ENCODE measurements at regions of chr3 and their contacts with region 1.

Region 1: DNA sequence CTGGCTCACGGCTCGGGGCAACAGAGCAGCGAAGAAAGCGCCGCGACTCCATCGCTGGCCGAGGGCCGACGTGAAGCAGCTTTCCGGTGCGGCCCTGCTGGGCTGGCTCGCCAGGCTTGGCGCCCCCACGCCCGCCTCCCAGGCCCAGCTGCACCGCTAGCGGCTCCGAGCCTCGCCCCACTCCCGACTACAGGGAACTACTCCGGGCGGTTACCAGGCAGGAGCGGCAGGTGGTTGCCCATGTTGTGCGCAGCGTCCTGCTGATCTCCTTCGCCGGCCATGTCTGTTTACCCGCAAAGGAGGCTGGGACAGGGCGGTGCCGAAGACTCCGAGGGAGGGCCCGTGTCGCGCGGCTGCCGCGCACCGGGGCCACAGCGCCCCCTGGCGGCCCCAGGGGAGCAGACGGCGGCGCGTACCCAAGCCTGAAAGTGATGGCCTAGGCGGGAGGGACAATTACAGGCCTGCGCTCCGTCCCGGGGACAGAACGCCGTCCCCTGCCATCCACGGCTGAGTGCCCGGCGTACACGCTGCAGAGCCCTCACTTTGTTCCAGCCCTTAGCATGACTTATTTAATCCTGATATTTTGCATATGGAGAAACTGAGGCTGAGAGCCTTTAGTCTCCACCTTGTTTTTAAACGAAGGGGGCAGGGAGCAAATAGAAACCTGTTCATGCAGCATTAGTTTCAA is at the start of gene CRBN:
- DNase-seq: peak; percentile 92
- H3K4me3 Mint-ChIP-seq: peak within 1 kb of the TSS; percentile 91
- H3K27ac Mint-ChIP-seq: peak within 1 kb of the TSS; percentile 88
- H3K4me1 Mint-ChIP-seq: peaks cover 49% of the 10 kb centered on the region
- H3K27me3 Mint-ChIP-seq: no peaks in the 10 kb centered on the region
- total RNA-seq, gene CRBN: 40.4 to 45.4 TPM

Region 2: DNA sequence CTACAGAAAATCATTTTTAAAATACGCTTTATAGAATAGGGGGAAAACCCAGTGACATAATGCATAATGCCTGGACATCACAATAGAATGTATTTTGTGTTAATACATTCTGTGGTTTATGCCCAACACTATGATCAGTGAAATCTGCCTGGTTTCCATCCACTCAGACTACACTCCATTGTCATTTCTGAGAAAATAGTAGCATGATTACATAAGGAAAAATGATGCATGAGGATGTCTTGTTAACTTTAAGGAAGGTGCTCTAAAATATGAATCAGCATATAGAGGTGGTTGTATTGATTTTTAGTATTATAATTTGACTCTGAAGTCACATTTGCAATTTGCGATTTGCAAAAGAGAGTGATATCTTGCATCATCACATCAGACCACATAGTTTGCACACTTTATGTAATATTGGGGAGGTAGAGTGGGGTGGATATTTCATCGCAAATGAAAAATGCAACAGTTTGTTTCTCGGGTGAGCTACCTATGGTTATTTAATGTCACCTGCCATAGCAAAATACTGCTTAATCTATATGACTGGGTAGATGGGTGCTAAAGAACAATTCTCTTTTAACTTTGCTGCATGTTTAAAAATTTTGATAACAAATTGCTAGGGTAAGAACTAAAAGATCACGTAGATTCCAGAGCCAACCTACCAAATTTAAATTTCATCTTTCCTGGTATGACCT is 473.3 kb before region 1 on chr3:
- CTCF ChIA-PET with region 1: no interaction called
- POLR2A ChIA-PET with region 1: no interaction called
- intact Hi-C with region 1: loop called (anchors 10 kb)
- DNase-seq: no peak
- H3K4me3 Mint-ChIP-seq: no peak overlapping the region
- H3K27ac Mint-ChIP-seq: no peak overlapping the region
- H3K4me1 Mint-ChIP-seq: no peaks in the 10 kb centered on the region
- H3K27me3 Mint-ChIP-seq: no peaks in the 10 kb centered on the region

Region 3: DNA sequence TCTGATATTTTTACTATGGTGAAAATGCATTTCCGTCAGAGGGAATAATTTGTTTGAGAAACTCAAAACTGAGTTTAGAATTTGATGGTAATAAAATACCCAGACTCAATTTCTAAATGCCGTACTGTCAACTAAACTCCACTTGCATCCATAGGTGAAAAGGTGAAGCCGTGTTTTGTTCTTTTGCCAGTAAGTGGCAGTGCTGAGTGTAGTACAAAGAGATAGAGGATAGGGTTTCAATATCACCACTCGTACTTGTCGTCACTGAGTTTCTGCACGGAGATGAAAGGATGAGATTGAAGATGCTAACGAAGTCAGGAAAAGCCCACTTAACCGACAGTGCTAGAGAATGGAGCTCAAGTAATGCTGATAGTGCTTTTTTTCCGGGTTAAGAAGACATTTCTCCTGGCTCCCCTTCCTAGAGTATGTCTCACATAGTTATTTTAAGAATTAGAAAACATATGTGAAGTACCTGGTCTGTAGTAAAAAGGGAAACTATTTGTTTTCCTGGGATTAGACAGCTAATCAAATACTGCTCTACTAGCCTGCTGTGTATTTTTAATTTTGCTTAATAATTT is 414.5 kb before region 1 on chr3:
- CTCF ChIA-PET with region 1: interaction called, 3 read pairs
- POLR2A ChIA-PET with region 1: no interaction called
- intact Hi-C with region 1: loop called (anchors 2 kb)
- DNase-seq: no peak
- H3K4me3 Mint-ChIP-seq: no peak overlapping the region
- H3K27ac Mint-ChIP-seq: no peak overlapping the region
- H3K4me1 Mint-ChIP-seq: peaks cover 4% of the 10 kb centered on the region
- H3K27me3 Mint-ChIP-seq: no peaks in the 10 kb centered on the region

Region 4: GRCh38 chr3:3027976-3028567 is 151.5 kb before region 1 on chr3:
- CTCF ChIA-PET with region 1: no interaction called
- POLR2A ChIA-PET with region 1: no interaction called
- intact Hi-C with region 1: loop called (anchors 5 kb)
- DNase-seq: no peak
- H3K4me3 Mint-ChIP-seq: no peak overlapping the region
- H3K27ac Mint-ChIP-seq: no peak overlapping the region
- H3K4me1 Mint-ChIP-seq: peaks cover 12% of the 10 kb centered on the region
- H3K27me3 Mint-ChIP-seq: no peaks in the 10 kb centered on the region

Region 5: DNA sequence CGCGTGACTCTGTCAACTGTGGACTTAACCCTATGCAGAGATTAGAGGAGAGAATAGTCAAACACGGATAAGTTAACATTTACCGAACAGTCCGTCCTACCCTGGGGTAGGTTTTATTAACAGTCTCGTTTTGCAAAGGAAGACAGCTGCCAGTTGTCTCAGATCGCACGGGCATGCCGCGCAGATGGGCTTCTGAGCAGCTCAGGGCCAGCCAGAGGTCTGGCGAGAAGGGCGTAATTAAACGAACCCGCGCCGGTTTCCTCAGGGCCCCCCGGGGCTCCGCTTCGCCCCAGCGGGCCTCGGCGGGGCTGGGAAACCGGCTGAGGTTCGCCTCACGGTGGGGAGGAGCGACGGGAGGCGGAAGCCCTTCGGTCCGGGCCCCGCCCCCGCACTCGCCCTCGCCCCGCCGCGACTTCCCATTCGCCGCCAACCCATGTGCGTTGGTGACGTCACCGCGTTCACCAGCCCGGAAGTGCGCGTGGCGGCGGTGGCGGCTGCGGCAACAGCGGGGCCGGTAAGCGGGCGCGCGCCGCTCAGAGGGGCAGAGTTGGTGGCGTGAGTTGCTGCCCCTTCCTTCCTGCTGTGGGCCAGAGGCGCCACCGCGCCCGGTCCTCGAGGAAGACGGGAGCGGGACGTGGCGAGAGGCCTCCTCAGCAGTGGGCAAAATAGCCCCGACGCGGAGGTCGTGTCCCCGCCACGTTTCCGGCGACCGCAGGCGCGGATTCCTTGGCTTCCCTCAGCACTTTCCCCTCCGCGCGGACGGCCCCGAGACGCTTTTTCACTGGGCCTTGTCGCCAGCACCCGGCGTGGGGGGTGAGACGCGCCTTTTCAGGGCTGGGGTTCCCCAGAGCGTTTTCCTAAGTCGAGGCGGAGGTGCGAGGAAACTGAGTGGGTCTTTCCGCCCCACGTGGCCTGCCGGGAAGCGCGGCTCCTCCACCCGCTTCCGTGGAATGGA is 52.8 kb before region 1 on chr3 and contains the start of gene TRNT1:
- CTCF ChIA-PET with region 1: no interaction called
- POLR2A ChIA-PET with region 1: no interaction called
- intact Hi-C with region 1: loop called (anchors 1 kb)
- DNase-seq: peak; percentile 97
- H3K4me3 Mint-ChIP-seq: peak within 1 kb of the TSS; percentile 97
- H3K27ac Mint-ChIP-seq: peak within 1 kb of the TSS; percentile 99
- H3K4me1 Mint-ChIP-seq: peaks cover 31% of the 10 kb centered on the region
- H3K27me3 Mint-ChIP-seq: no peaks in the 10 kb centered on the region
- total RNA-seq, gene TRNT1: 51.5 to 53.6 TPM

Region 6: GRCh38 chr3:3165241-3165640 is 14.3 kb before region 1 on chr3:
- CTCF ChIA-PET with region 1: interaction called, 6 read pairs
- POLR2A ChIA-PET with region 1: interaction called, 3 read pairs
- intact Hi-C with region 1: loop called (anchors 1 kb)
- DNase-seq: peak; percentile 57
- H3K4me3 Mint-ChIP-seq: no peak overlapping the region
- H3K27ac Mint-ChIP-seq: peak overlapping the region; percentile 86
- H3K4me1 Mint-ChIP-seq: peaks cover 62% of the 10 kb centered on the region
- H3K27me3 Mint-ChIP-seq: no peaks in the 10 kb centered on the region

Region 7: GRCh38 chr3:3191675-3192285 is 12.2 kb after region 1 on chr3:
- CTCF ChIA-PET with region 1: interaction called, 7 read pairs
- POLR2A ChIA-PET with region 1: interaction called, 4 read pairs
- intact Hi-C with region 1: loop called (anchors 1 kb)
- DNase-seq: no peak
- H3K4me3 Mint-ChIP-seq: peak overlapping the region; percentile 11
- H3K27ac Mint-ChIP-seq: peak overlapping the region; percentile 67
- H3K4me1 Mint-ChIP-seq: peaks cover 44% of the 10 kb centered on the region
- H3K27me3 Mint-ChIP-seq: no peaks in the 10 kb centered on the region